Tibial artery (tissue), 4 donors: ENCODE measurements at regions of chr21 and their contacts with region 1.

Region 1: GRCh38 chr21:34129039-34129891 is 55.9 kb downstream of the MRPS6 start:
- DNase-seq: peak; percentile 69 to 87
- H3K4me3 ChIP-seq: peak overlapping the region; percentile 20 to 34
- H3K27ac ChIP-seq: peak overlapping the region; percentile 63 to 77
- H3K4me1 ChIP-seq: peaks cover 4 to 99% (median 70%) of the 10 kb centered on the region in 4 donors
- H3K27me3 ChIP-seq: no peaks in the 10 kb centered on the region
- CTCF ChIP-seq: peak; percentile 37 to 41

Region 2: GRCh38 chr21:34187935-34188334 is 58.7 kb after region 1 on chr21:
- intact Hi-C with region 1: loop called (anchors 10 kb)
- DNase-seq: peak; percentile 63 to 75
- H3K4me3 ChIP-seq: no peak overlapping the region
- H3K27ac ChIP-seq: peak overlapping the region in 1 of 2 donors; percentile 5
- H3K4me1 ChIP-seq: peaks cover 0 to 31% (median 14%) of the 10 kb centered on the region in 4 donors
- H3K27me3 ChIP-seq: no peaks in the 10 kb centered on the region
- CTCF ChIP-seq: no peak

Region 3: GRCh38 chr21:34345091-34345871 is 216.0 kb after region 1 on chr21:
- intact Hi-C with region 1: loop called (anchors 5 kb)
- DNase-seq: no peak
- H3K4me3 ChIP-seq: no peak overlapping the region
- H3K27ac ChIP-seq: peak overlapping the region; percentile 77 to 83
- H3K4me1 ChIP-seq: peaks cover 0 to 52% (median 35%) of the 10 kb centered on the region in 4 donors
- H3K27me3 ChIP-seq: no peaks in the 10 kb centered on the region
- CTCF ChIP-seq: no peak